Activated T-helper 1 cell treated with anti-CD3 and anti-CD28 coated beads, Interleukin-12 subunit alpha, Interleukin-12 subunit beta, Interleukin-2, Interleukin-4 antibody, amounts not matched to agents 30 ng/mL and 10 ng/mL and 1 ng/mL, durations not matched to agents 14 hours and 24 hours and 36 hours (primary cell): ENCODE measurements at regions of chr9 and their contacts with region 1.

Region 1: GRCh38 chr9:70500793-70501192 is 86.3 kb upstream of the KLF9 start:
- DNase-seq: no peak
- H3K4me3 Mint-ChIP-seq: no peak overlapping the region
- H3K27ac Mint-ChIP-seq: no peak overlapping the region
- H3K4me1 Mint-ChIP-seq: peaks cover 13% of the 10 kb centered on the region
- H3K27me3 Mint-ChIP-seq: no peaks in the 10 kb centered on the region

Region 2: GRCh38 chr9:70484210-70485130 is 16.3 kb before region 1 on chr9:
- intact Hi-C with region 1: loop called (anchors 2 kb)
- DNase-seq: no peak
- H3K4me3 Mint-ChIP-seq: no peak overlapping the region
- H3K27ac Mint-ChIP-seq: no peak overlapping the region
- H3K4me1 Mint-ChIP-seq: no peaks in the 10 kb centered on the region
- H3K27me3 Mint-ChIP-seq: no peaks in the 10 kb centered on the region